ENCODE measurements at regions of chr15 and their contacts with region 1.

Region 1: DNA sequence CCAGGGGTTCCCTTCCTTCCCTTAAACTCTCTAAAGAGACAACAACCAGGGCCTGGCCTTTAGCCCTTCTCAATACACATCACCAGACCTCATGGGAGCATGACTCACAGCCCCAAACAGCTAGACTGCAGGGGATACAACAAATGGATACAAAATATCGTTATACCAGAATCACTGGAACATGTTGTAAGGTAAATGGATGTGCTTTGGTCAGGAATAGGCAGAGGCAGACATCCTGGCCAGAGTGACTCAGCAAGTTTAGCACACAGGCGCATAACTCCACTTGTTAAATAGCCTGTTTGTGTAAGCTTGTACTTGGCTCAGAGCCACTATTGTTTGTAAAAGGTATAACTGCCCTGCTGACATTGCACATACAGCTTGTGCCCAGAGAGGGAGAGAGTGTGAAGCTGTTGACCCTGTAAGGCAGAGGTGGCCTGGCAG is 18.3 kb downstream of the TMED3 start:
- DNase-seq: peak; percentile 69
- H3K4me3 Mint-ChIP-seq: no peak overlapping the region
- H3K27ac Mint-ChIP-seq: peak overlapping the region; percentile 79
- H3K4me1 Mint-ChIP-seq: peaks cover 6% of the 10 kb centered on the region
- H3K27me3 Mint-ChIP-seq: no peaks in the 10 kb centered on the region
- CTCF ChIP-seq: no peak

Region 2: DNA sequence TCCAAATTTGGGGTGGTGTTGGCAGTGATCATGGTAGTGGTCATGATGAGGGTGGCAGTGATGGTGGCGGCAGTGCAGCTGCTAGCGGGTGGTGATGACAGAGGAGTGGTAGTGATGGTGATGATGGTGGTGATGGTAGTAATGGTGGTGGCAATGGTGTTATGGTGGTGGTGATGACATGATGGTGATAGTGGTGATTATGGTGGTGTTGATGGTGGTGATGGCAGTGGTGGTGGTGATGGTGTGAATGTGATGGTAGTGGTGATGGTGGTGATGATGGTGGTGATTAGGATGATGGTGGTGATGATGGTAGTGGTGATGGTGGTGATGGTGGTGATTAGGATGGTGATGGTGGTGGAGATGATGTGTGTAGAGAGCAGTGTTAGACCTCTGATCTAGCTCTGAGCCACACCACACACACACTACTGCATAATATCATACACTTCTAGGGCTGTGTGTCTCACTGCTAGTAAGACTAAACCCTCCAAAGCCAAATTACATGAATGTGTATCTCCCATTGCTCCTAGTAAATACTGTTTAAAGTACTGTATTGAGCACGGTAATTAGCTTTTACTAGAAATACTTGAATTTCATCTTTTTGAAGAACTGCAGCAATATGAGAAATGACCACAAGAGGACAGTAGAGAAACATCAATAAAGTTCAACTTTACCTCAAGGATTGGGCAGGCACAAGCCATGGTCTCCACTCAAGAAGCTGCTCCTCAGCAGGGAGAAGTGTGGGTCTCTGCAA is 10.5 kb after region 1 on chr15:
- CTCF ChIA-PET with region 1: interaction called, 24 read pairs
- POLR2A ChIA-PET with region 1: no interaction called
- intact Hi-C with region 1: no loop called
- DNase-seq: peak; percentile 47
- H3K4me3 Mint-ChIP-seq: no peak overlapping the region
- H3K27ac Mint-ChIP-seq: no peak overlapping the region
- H3K4me1 Mint-ChIP-seq: no peaks in the 10 kb centered on the region
- H3K27me3 Mint-ChIP-seq: no peaks in the 10 kb centered on the region
- CTCF ChIP-seq: peak; percentile 72

Region 3: GRCh38 chr15:79364571-79365240 is 35.5 kb after region 1 on chr15:
- CTCF ChIA-PET with region 1: no interaction called
- POLR2A ChIA-PET with region 1: no interaction called
- intact Hi-C with region 1: no loop called
- DNase-seq: no peak
- H3K4me3 Mint-ChIP-seq: no peak overlapping the region
- H3K27ac Mint-ChIP-seq: no peak overlapping the region
- H3K4me1 Mint-ChIP-seq: no peaks in the 10 kb centered on the region
- H3K27me3 Mint-ChIP-seq: no peaks in the 10 kb centered on the region
- CTCF ChIP-seq: no peak